GM10248 (cell line): ENCODE measurements at regions of chr2 and their contacts with region 1.

Region 1: GRCh38 chr2:199739413-199740110 is 111.4 kb downstream of the FTCDNL1 start:
- DNase-seq: peak; percentile 54
- CTCF ChIP-seq: peak; percentile 88

Region 2: GRCh38 chr2:199692489-199692888 is 47.1 kb before region 1 on chr2:
- CTCF ChIA-PET with region 1: interaction called, 17 read pairs
- POLR2A ChIA-PET with region 1: no interaction called
- DNase-seq: no peak
- CTCF ChIP-seq: no peak

Region 3: GRCh38 chr2:199716807-199717586 is 22.6 kb before region 1 on chr2:
- CTCF ChIA-PET with region 1: interaction called, 22 read pairs
- POLR2A ChIA-PET with region 1: no interaction called
- DNase-seq: no peak
- CTCF ChIP-seq: no peak

Region 4: GRCh38 chr2:199756743-199757142 is 17.2 kb after region 1 on chr2:
- CTCF ChIA-PET with region 1: interaction called, 47 read pairs
- POLR2A ChIA-PET with region 1: no interaction called
- DNase-seq: no peak
- CTCF ChIP-seq: no peak